ENCODE measurements at regions of chr17 and their contacts with region 1.

Region 1: DNA sequence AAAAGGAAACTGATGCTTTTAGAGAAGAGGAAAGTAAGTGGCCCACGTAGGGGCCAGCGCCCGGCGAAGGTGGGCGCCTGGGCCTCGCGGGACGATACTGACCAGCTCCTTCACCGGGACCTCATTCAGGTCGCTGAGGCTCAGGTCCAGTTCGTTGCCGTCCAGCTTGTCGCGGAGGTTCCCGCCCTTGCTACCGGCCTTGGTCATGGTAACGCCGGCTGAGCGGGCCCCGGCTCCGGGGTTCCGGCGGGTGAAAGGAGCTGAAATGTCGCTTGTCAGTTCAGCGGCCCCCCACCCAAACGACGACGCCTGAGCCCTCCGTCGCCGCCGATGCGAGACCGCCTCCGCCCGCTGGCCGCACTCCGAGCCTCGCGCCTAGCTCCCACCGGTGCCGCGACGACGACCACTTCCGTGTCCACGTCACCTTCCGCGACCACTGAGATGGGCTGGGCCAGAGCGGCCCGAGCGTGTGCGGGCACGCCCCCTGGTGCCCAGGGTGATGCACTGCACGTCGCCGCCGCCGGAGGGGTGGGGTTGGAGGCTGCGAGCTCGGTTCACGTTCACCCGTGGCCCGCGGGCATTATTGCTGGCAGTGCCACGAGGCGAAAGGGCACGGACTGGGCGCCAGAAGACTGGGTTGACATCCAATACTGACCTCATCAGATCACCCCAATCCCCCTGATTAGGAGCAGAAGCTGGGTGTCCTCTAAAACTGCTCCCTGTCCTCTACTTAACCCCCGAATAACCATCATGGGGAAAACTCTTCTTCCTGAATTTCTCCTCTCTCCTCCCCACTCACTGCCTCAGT is at the start of gene LRRC59:
- DNase-seq: peak; percentile 90 to 95 (median 91)
- H3K4me3 ChIP-seq: peak within 1 kb of the TSS; percentile 95
- H3K4me3 Mint-ChIP-seq: peak within 1 kb of the TSS; percentile 84 to 95 (median 93)
- H3K27ac ChIP-seq: peak within 1 kb of the TSS; percentile 95
- H3K27ac Mint-ChIP-seq: peak within 1 kb of the TSS; percentile 72 to 96 (median 94)
- H3K4me1 ChIP-seq: peaks cover 29% of the 10 kb centered on the region
- H3K4me1 Mint-ChIP-seq: peaks cover 26 to 48% (median 43%) of the 10 kb centered on the region in 3 donors
- H3K27me3 ChIP-seq: no peaks in the 10 kb centered on the region
- H3K27me3 Mint-ChIP-seq: no peaks in the 10 kb centered on the region
- total RNA-seq, gene LRRC59: 122 to 127 TPM

Region 2: GRCh38 chr17:50161023-50161910 is 236.0 kb before region 1 on chr17:
- CTCF ChIA-PET with region 1: no interaction called
- POLR2A ChIA-PET with region 1: no interaction called
- DNase-seq: peak; percentile 93 to 96 (median 93)
- H3K4me3 ChIP-seq: peak overlapping the region; percentile 78
- H3K4me3 Mint-ChIP-seq: peak overlapping the region; percentile 1 to 82 (median 54)
- H3K27ac ChIP-seq: no peak overlapping the region
- H3K27ac Mint-ChIP-seq: peak overlapping the region; percentile 21 to 96 (median 89)
- H3K4me1 ChIP-seq: peaks cover 34% of the 10 kb centered on the region
- H3K4me1 Mint-ChIP-seq: peaks cover 24 to 32% (median 29%) of the 10 kb centered on the region in 3 donors
- H3K27me3 ChIP-seq: no peaks in the 10 kb centered on the region
- H3K27me3 Mint-ChIP-seq: peaks cover 0 to 3% of the 10 kb centered on the region in 2 donors

Region 3: GRCh38 chr17:50361561-50362480 is 35.5 kb before region 1 on chr17:
- CTCF ChIA-PET with region 1: interaction called, 57 read pairs
- POLR2A ChIA-PET with region 1: interaction called, 6 read pairs
- DNase-seq: peak; percentile 31 to 74 (median 51)
- H3K4me3 ChIP-seq: no peak overlapping the region
- H3K4me3 Mint-ChIP-seq: peak overlapping the region in 4 of 7 donors; percentile 9 to 48 (median 20)
- H3K27ac ChIP-seq: no peak overlapping the region
- H3K27ac Mint-ChIP-seq: peak overlapping the region; percentile 3 to 95 (median 66)
- H3K4me1 ChIP-seq: peaks cover 5% of the 10 kb centered on the region
- H3K4me1 Mint-ChIP-seq: peaks cover 9 to 15% (median 12%) of the 10 kb centered on the region in 3 donors
- H3K27me3 ChIP-seq: no peaks in the 10 kb centered on the region
- H3K27me3 Mint-ChIP-seq: no peaks in the 10 kb centered on the region

Region 4: DNA sequence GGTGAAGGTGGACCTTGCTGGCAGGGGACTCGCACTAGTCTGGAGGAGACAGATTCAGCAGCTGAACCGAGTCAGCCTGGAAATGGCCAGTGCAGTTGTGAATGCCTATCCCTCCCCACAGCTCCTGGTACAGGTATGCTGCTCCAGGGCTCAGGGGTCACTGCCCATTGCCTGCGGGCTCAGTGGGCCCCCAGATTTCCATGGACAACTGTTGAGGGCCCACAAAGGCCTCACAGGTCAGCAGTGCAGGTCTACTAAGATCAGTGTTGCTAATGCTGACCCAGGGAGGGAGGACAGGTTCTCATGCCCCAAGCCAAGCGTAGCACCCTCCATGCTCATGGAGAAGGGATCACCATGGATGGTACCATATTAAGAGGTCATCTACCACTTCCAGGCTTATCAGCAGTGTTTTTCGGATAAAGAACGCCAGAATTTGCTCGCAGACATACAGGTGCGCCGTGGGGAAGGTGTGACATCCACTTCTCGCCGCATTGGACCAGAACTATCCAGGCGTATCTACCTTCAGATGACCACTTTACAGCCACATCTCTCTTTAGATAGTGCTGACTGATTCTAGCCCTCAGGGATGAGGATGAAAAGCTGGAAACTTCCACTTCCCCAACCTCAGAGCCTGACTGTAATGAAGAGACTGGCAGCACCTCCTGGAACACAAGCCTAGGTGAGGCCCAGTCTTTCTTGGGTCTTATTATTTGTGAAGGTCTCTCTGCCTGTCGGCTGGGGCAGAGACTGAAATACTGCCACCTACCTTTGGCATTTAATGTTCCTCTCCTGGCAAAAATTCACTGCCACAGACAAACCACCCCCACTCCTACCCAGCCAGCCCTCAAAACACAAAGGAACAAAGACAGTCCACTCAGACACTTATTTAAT is 16.7 kb before region 1 on chr17:
- CTCF ChIA-PET with region 1: interaction called, 41 read pairs
- POLR2A ChIA-PET with region 1: interaction called, 4 read pairs
- DNase-seq: no peak
- H3K4me3 ChIP-seq: no peak overlapping the region
- H3K4me3 Mint-ChIP-seq: no peak overlapping the region
- H3K27ac ChIP-seq: no peak overlapping the region
- H3K27ac Mint-ChIP-seq: no peak overlapping the region
- H3K4me1 ChIP-seq: no peaks in the 10 kb centered on the region
- H3K4me1 Mint-ChIP-seq: no peaks in the 10 kb centered on the region
- H3K27me3 ChIP-seq: no peaks in the 10 kb centered on the region
- H3K27me3 Mint-ChIP-seq: no peaks in the 10 kb centered on the region

Region 5: GRCh38 chr17:50425682-50426471 is 28.6 kb after region 1 on chr17 and contains the start of gene ACSF2:
- CTCF ChIA-PET with region 1: interaction called, 30 read pairs
- POLR2A ChIA-PET with region 1: interaction called, 7 read pairs
- DNase-seq: peak; percentile 50 to 82 (median 67)
- H3K4me3 ChIP-seq: peak within 1 kb of the TSS; percentile 58
- H3K4me3 Mint-ChIP-seq: peak within 1 kb of the TSS; percentile 86 to 93 (median 88)
- H3K27ac ChIP-seq: peak within 1 kb of the TSS; percentile 60
- H3K27ac Mint-ChIP-seq: peak within 1 kb of the TSS; percentile 58 to 96 (median 90)
- H3K4me1 ChIP-seq: peaks cover 33% of the 10 kb centered on the region
- H3K4me1 Mint-ChIP-seq: peaks cover 29 to 38% (median 35%) of the 10 kb centered on the region in 3 donors
- H3K27me3 ChIP-seq: no peaks in the 10 kb centered on the region
- H3K27me3 Mint-ChIP-seq: no peaks in the 10 kb centered on the region
- total RNA-seq, gene ACSF2: 12.4 to 14.8 TPM

Region 6: GRCh38 chr17:50478391-50479381 is 81.4 kb after region 1 on chr17 and contains the start of gene RSAD1:
- CTCF ChIA-PET with region 1: interaction called, 14 read pairs
- POLR2A ChIA-PET with region 1: interaction called, 5 read pairs
- DNase-seq: peak; percentile 77 to 89 (median 81)
- H3K4me3 ChIP-seq: peak within 1 kb of the TSS; percentile 97
- H3K4me3 Mint-ChIP-seq: peak within 1 kb of the TSS; percentile 86 to 96 (median 91)
- H3K27ac ChIP-seq: peak within 1 kb of the TSS; percentile 85
- H3K27ac Mint-ChIP-seq: peak within 1 kb of the TSS; percentile 81 to 99 (median 92)
- H3K4me1 ChIP-seq: peaks cover 16% of the 10 kb centered on the region
- H3K4me1 Mint-ChIP-seq: peaks cover 17 to 35% (median 32%) of the 10 kb centered on the region in 3 donors
- H3K27me3 ChIP-seq: no peaks in the 10 kb centered on the region
- H3K27me3 Mint-ChIP-seq: no peaks in the 10 kb centered on the region
- total RNA-seq, gene RSAD1: 45.7 to 46.8 TPM

Measured in CD8-positive, alpha-beta memory T cell (primary cell).